Body of pancreas (tissue), 4 donors: ENCODE measurements at regions of chr18 and their contacts with region 1.

Region 1: DNA sequence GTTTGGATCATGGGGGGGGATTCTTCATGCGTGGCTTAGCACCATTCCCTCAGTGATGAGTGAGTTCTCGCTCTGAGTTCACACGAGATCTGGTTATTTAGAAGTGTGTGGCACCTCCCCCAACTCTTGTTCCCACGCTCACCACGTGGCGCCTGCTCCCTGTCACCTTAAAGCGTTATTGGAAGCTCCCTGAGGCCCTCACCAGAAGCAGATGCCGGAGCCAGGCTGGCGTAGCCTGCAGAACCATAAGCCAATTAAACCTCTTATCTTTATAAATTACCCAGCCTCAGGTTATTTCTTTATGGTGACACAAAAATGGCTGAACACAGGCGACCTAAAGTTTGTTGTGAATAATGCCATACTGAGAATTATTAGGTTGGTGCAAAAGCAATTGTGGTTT is 10.5 kb upstream of the MTCL1 start:
- DNase-seq: no peak
- ATAC-seq: no peak
- H3K4me3 ChIP-seq: no peak overlapping the region
- H3K27ac ChIP-seq: no peak overlapping the region
- H3K4me1 ChIP-seq: no peaks in the 10 kb centered on the region
- H3K27me3 ChIP-seq: no peaks in the 10 kb centered on the region
- CTCF ChIP-seq: no peak
- POLR2A ChIP-seq: no peak

Region 2: GRCh38 chr18:8990276-8991031 is 295.6 kb after region 1 on chr18:
- intact Hi-C with region 1: loop called (anchors 5 kb)
- DNase-seq: peak; percentile 78 to 87 (median 84)
- ATAC-seq: peak; percentile 89
- H3K4me3 ChIP-seq: no peak overlapping the region
- H3K27ac ChIP-seq: peak overlapping the region in 1 of 4 donors; percentile 32
- H3K4me1 ChIP-seq: peaks cover 28% of the 10 kb centered on the region
- H3K27me3 ChIP-seq: no peaks in the 10 kb centered on the region
- CTCF ChIP-seq: no peak
- POLR2A ChIP-seq: no peak